Posterior cingulate gyrus (tissue), 11 donors: ENCODE measurements at regions of chr17 and their contacts with region 1.

Region 1: GRCh38 chr17:44308320-44308818 is at the start of gene RUNDC3A:
- DNase-seq: peak; percentile 88 to 99 (median 92)

Region 2: GRCh38 chr17:44218344-44219107 is 89.8 kb before region 1 on chr17:
- intact Hi-C with region 1: loop called (anchors 1 kb)
- DNase-seq: peak; percentile 75 to 98 (median 82)

Region 3: DNA sequence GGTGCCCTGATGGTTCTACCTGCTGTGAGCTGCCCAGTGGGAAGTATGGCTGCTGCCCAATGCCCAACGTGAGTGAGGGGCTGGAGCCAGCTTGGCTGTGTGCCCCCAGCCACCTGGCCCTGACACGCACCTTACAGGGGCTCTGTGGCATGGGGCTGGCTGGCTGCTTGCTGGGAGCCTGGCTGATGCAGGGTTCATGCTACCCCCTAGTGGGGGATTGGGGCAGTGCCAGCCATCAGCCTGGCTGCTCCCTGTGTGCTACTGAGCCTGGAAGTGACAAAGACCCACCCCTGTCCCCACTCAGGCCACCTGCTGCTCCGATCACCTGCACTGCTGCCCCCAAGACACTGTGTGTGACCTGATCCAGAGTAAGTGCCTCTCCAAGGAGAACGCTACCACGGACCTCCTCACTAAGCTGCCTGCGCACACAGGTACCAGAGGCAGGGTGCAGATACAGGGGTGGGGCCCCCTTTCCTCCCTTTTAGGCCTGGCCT is 42.4 kb after region 1 on chr17:
- intact Hi-C with region 1: no loop called
- DNase-seq: peak; percentile 61 to 96 (median 80)

Region 4: DNA sequence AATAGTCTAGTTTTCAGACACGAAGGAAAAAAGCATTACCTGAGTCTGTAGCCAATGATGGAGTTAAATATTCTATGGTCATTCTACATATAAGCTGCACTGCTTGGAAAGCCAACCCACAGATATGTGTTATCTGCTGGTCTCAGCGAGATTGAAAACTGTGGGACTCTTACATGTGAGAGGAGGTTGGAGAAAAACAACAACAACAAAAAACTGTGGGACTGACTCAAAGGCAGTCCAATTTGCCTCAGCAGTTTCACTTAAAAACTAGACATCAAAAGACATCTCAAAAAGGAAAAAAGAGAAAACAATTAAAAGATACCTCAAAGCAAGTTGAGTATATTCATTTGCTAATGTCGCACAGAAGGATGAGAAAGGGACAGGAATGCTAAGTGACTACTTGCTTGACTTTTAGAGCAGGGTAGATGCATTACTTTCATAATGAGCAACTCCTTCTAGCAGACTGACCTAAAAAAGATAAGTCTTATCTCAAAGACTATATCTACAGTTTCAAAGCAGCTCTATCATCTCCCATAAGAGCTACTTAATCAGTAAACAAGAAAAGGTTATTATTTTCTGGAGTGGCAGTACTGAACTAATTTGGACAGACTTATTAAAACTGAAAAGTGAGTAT is 116.6 kb after region 1 on chr17:
- intact Hi-C with region 1: no loop called
- DNase-seq: no peak